A549 (cell line): ENCODE measurements at regions of chr18 and their contacts with region 1.

Region 1: DNA sequence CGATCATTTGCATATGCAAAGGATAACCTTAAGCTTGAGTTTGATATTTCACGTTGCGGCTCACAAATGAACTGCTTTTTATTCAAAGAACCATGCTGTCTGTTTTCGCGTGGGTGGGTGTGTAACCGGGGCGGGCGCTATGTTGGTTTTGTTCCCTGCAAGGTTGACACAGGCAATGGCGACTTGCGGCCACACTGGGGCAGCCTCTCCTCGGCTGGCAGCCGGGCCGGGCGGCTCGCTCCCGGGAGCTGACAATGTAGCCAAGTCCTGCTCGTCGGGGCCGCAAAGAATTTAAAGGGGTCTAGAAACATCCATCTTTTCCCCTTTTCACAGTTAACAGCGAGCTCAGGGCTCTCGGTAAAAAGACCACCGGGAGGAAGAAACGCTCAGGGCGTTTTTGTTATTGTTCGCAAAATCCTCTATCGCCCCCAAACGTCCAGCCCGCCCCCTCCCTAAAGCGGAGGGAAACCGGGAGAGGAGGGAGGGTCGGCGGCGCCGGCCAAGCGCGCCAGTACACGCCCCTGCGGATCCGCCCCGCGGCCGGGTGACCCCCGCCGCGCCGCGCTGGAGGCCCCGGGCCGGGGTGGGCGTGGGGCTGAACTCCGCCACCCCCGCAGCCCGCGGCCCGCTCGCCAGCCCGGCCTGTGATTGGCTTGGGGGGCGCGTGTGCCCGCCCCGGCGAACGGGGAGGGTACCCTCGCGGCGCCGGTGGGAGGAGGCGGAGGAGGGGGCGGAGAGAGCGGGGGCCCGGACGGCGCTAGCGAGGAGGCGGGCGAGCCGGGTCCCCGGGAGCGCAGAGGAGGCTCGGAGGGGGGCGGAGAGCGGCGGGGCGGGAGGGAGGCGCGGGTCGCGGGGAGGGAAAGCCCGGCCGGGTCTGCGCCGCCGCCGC is at the start of gene NEDD4L:
- DNase-seq: peak; percentile 55 to 85
- ATAC-seq: peak; percentile 76 to 85
- H3K4me3 ChIP-seq: peak within 1 kb of the TSS; percentile 86
- H3K27ac ChIP-seq: peak within 1 kb of the TSS; percentile 91 to 94
- H3K4me1 ChIP-seq: peaks cover 17% of the 10 kb centered on the region
- CTCF ChIP-seq: peak; percentile 72
- EP300 ChIP-seq: no peak
- POLR2A ChIP-seq: no peak
- RAD21 ChIP-seq: peak; percentile 76 to 88
- polyA plus RNA-seq, gene NEDD4L: 36.5 TPM in 2 replicates

Region 2: DNA sequence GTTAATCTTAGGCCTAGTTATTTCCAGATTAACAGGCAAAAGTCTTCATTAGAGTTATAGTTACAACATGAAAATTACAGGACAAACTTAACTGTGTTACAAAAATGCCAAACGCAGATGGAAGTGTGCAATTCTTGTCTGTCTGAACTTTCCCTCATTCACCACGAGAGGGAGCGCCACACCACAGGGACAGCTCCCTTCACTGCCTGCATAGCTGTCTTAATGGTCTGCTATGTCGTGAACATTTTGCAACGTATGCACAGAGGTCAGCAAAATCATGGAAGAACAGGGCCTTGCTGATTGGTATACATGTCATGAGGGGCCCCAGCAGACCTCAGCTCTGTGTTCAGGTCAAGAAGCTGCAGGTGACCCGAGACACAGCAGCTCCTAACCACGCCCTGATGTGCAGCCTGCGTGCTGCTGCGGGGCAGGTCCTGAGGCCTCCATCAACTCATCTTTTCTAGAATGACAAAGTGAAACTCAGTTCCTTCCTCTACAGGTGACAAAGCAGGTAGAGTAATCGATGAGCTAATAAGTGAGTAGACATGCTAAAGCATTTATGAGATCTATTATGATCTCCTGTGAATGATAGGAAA is 161.8 kb before region 1 on chr18:
- CTCF ChIA-PET with region 1: interaction called, 20 read pairs
- POLR2A ChIA-PET with region 1: no interaction called
- DNase-seq: peak; percentile 20 to 84
- ATAC-seq: peak; percentile 94 to 98
- H3K4me3 ChIP-seq: no peak overlapping the region
- H3K27ac ChIP-seq: peak overlapping the region; percentile 67 to 77
- H3K4me1 ChIP-seq: peaks cover 16% of the 10 kb centered on the region
- CTCF ChIP-seq: peak; percentile 83
- EP300 ChIP-seq: no peak
- POLR2A ChIP-seq: no peak
- RAD21 ChIP-seq: peak; percentile 94 to 95

Region 3: DNA sequence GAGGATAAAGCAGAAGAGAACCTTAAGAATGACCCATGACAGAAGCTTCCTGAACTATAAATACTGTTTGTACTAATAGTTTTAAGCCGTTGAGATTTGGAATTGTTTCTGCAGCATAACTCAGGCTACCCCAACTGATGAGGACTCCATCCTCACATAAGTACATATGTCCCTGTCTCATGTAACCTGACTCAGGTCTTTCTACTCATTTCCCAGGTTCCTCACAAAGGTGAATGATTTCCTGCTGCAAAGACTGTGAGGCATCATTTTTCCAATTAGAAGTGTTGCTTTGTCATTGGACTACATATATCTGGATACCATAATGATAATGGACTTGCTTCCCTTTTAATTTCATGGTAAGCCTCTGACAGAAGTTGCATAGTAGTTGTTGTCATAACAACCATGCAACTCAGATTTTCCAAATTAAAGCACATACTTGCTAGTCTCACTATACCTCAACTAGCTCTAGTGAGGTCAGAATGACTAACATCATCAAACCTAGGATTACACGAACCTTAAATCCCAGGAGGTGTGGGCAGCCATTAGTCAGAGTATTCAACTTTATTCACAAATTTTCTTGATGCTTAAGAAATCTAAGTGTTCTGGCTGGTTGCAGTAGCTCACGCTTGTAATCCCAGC is 37.7 kb before region 1 on chr18:
- CTCF ChIA-PET with region 1: interaction called, 12 read pairs
- POLR2A ChIA-PET with region 1: no interaction called
- DNase-seq: no peak
- ATAC-seq: no peak
- H3K4me3 ChIP-seq: no peak overlapping the region
- H3K27ac ChIP-seq: peak overlapping the region; percentile 83 to 86
- H3K4me1 ChIP-seq: peaks cover 57% of the 10 kb centered on the region
- CTCF ChIP-seq: no peak
- EP300 ChIP-seq: no peak
- POLR2A ChIP-seq: no peak
- RAD21 ChIP-seq: no peak

Region 4: DNA sequence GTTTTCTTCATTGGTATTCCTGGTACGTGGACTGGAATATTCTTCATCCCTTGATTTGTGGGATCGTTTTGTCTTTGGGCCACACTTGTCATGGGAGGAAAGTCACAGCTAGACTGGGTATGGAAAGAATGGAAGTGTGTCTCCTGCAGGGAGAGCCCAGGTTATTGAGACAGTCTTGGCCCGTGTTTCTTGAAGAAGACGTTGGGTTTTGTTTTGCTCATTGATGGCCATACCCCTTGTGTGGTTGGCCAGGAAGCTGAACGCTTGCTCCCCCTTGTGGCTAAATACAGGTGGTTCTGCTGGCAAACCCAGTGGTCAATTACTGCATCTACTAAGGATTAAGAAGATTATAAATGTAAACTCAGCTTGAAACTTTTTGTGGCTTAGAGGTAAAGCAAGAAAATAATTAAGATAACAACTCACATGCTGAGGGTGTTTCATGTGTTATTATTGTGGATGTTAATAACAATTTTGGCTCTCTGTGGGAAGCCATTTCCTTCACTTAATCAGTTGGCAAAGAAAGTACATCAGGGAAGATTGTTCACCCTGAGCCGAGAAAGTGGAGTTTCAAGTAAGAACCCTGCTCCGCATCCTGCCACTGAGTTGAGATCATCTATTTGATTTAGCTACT is 92.1 kb after region 1 on chr18:
- CTCF ChIA-PET with region 1: interaction called, 11 read pairs
- POLR2A ChIA-PET with region 1: no interaction called
- DNase-seq: peak; percentile 61 to 71
- ATAC-seq: peak; percentile 78 to 93; a peak in 4 of 6 replicates
- H3K4me3 ChIP-seq: no peak overlapping the region
- H3K27ac ChIP-seq: 0 out of 6 replicates have a peak overlapping the region, but pooled peaks of 1 of the 2 experiments have one; percentile 14
- H3K4me1 ChIP-seq: 0 out of 3 replicates have a peak, but pooled peaks cover 4% of the 10 kb centered on the region
- CTCF ChIP-seq: peak; percentile 60
- EP300 ChIP-seq: no peak
- POLR2A ChIP-seq: no peak
- RAD21 ChIP-seq: peak; percentile 48 to 66